Activated B cell treated with CpG ODN at 0.5 μM for 24 hours (primary cell): ENCODE measurements at regions of chr3 and their contacts with region 1.

Region 1: DNA sequence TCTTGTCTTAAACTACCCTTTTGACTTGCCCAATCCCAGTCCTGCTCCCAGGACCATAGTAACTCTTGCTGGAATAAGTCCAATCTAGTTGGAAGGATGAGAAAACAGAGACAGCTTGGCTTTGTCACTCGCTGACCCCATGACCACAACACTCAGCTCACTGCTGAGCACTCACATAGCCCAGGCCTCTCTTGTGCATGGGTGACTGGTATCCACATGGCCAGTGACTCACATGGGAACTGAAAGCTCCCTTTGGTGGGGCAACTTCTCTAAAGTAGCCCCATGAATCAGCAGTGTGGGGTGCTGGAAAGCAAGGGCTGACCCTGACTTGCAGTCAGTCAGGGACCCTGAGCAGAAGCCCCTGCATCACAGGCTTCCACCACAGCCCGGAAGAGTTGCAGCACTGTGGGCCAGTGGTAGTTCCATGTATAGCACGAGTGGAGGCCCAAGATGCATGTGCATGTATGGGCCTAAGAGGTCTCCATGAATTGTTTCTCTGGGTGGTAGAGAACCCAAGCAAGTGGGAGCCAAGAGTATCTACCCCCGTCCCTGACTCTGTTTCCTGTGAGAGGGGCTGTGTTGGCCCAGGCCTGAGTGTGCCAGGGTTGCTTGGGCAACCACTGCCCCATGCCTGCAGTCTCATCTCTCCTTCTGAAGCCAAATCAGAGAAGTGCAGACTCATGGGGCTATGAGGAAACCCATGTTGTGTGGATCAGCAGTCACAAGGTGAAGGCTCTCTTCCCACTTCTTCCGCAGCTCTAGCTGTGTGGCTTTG is 62.1 kb upstream of the XCR1 start:
- DNase-seq: no peak
- ATAC-seq: peak; percentile 78
- H3K4me3 Mint-ChIP-seq: no peak overlapping the region
- H3K27ac Mint-ChIP-seq: no peak overlapping the region
- H3K4me1 Mint-ChIP-seq: peaks cover 62% of the 10 kb centered on the region
- H3K27me3 Mint-ChIP-seq: no peaks in the 10 kb centered on the region
- CTCF ChIP-seq: no peak

Region 2: DNA sequence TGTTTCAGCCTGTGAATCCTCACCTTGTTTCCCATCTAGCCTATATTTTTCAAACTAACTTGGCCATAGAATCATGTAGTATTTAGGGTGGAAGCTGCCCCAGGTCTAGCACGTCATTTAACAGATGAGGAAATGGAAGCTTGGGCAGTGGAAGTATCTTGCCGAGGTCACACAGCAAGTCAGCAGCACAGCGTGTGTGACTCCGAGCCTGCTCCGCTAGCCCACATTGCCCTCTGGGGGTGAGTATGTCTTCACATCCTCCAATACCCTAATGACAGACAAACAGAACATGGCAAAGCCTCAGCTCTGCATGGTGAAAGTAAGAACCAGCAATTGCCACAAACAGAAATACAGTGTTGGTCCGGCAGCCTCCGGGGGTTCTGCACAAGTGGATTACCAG is 279.1 kb after region 1 on chr3:
- CTCF ChIA-PET with region 1: interaction called, 48 read pairs
- POLR2A ChIA-PET with region 1: interaction called, 3 read pairs
- intact Hi-C with region 1: loop called (anchors 1 kb)
- DNase-seq: peak; percentile 33
- ATAC-seq: peak; percentile 91
- H3K4me3 Mint-ChIP-seq: peak overlapping the region; percentile 7
- H3K27ac Mint-ChIP-seq: no peak overlapping the region
- H3K4me1 Mint-ChIP-seq: peaks cover 34% of the 10 kb centered on the region
- H3K27me3 Mint-ChIP-seq: peaks cover 2% of the 10 kb centered on the region
- CTCF ChIP-seq: no peak

Region 3: GRCh38 chr3:46442576-46443562 is 353.4 kb after region 1 on chr3:
- CTCF ChIA-PET with region 1: interaction called, 3 read pairs
- POLR2A ChIA-PET with region 1: no interaction called
- intact Hi-C with region 1: loop called (anchors 5 kb)
- DNase-seq: no peak
- ATAC-seq: no peak
- H3K4me3 Mint-ChIP-seq: no peak overlapping the region
- H3K27ac Mint-ChIP-seq: no peak overlapping the region
- H3K4me1 Mint-ChIP-seq: peaks cover 39% of the 10 kb centered on the region
- H3K27me3 Mint-ChIP-seq: no peaks in the 10 kb centered on the region
- CTCF ChIP-seq: no peak